ENCODE measurements at regions of chr10 and their contacts with region 1.

Region 1: DNA sequence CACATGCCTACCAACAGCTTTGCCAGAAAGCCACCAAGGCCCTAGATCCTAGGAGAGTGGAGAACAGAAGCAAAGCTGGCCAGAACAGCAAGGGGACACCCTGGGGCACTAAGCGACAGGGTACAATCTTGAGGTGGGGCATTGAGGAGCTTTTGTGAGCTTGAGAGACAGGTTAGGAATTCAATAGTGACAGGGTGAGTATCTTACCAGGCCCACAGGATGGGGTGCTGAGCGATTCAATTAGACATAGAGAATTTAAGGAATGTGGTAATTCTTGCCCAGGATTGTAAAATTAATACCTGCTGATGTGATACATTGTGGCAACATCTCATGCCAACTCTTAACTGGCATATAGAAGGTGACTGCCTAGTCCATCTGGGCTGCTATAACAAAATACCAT is 14.0 kb downstream of the RBP3 start:
- DNase-seq: no peak
- H3K4me3 ChIP-seq: no peak overlapping the region
- H3K27ac ChIP-seq: no peak overlapping the region
- H3K4me1 ChIP-seq: no peaks in the 10 kb centered on the region
- H3K27me3 ChIP-seq: no peaks in the 10 kb centered on the region
- CTCF ChIP-seq: no peak

Region 2: GRCh38 chr10:47176903-47177868 is 185.0 kb before region 1 on chr10:
- CTCF ChIA-PET with region 1: no interaction called
- POLR2A ChIA-PET with region 1: no interaction called
- intact Hi-C with region 1: no loop called
- DNase-seq: no peak
- H3K4me3 ChIP-seq: no peak overlapping the region
- H3K27ac ChIP-seq: no peak overlapping the region
- H3K4me1 ChIP-seq: peaks cover 11% of the 10 kb centered on the region
- H3K27me3 ChIP-seq: no peaks in the 10 kb centered on the region
- CTCF ChIP-seq: no peak

Region 3: GRCh38 chr10:47412869-47413268 is 50.7 kb after region 1 on chr10:
- CTCF ChIA-PET with region 1: no interaction called
- POLR2A ChIA-PET with region 1: no interaction called
- intact Hi-C with region 1: no loop called
- DNase-seq: no peak
- H3K4me3 ChIP-seq: no peak overlapping the region
- H3K27ac ChIP-seq: no peak overlapping the region
- H3K4me1 ChIP-seq: no peaks in the 10 kb centered on the region
- H3K27me3 ChIP-seq: no peaks in the 10 kb centered on the region
- CTCF ChIP-seq: no peak

Region 4: DNA sequence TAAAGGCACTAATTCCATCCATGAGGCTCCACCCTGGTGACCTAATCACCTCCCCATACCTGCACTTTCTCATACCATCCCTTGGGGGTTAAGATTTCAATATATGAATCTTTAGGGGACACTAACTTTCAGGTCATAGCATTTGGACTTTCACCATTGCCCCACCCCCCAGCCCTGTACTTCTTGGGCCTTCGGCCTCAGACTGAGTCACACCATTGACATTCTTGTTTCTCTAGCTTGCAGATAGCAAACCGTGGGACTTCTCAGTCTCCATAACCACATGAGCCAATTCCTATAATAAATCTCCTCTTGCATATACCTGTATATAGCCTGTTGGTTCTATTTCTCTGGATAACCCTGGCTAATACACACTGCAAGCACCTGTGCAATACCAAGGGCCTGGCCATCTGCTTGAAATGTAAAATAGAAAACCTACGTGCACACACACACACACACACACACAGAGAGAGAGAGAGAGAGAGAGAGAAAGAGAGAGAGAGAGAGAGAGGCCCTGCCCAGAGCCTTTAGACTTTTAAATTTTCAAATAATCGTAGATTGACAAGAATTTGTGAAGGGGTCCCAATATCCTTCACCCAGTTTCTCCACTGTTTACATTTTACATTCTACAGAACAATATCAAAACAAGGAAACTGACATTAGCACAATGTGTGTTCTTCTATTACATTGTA is 96.4 kb after region 1 on chr10:
- CTCF ChIA-PET with region 1: interaction called, 14 read pairs
- POLR2A ChIA-PET with region 1: no interaction called
- intact Hi-C with region 1: no loop called
- DNase-seq: no peak
- H3K4me3 ChIP-seq: no peak overlapping the region
- H3K27ac ChIP-seq: no peak overlapping the region
- H3K4me1 ChIP-seq: no peaks in the 10 kb centered on the region
- H3K27me3 ChIP-seq: no peaks in the 10 kb centered on the region
- CTCF ChIP-seq: no peak